HEK293 (cell line): ENCODE measurements at regions of chr3 and their contacts with region 1.

Region 1: DNA sequence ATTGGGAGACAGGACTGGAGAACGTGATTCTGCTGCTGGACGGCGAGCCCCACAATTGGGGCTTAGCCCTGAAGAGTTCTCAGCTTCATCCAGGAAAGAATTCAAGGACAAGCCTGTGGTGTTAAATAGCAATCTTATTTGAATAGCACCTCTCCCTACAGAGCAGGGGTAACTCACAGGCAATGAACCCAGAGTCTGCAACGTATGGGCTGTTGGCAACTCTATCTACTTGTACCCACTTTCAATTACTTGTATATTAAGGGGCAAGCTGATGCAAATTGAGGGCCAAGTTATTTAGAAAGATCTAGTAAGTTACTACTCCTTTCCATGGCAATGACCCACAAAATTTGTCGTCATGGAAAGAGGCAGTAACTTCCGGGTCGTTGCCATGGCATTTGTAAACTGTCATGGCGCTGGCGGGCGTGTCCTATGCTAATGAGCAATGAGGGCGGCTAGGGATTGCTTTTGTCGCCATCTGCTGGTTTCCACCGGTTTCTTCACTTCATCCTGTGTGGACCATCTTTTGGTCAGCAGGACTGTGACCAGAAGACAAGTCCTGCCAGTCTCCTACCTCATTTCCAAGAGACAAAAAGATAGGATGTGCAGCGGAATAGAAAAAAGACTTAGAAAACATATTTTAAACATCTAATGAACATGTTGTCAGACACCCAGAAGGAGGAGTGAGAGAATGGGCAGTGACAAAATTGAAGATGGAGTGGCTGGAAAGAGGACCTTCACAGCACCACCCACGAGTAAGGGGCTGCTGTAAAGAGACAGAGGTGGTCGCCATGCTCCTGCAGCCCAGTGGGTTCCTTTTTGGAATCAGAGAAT is 45.8 kb upstream of the SH3BP5 start:
- H3K4me3 ChIP-seq: no peak overlapping the region
- H3K27ac ChIP-seq: no peak overlapping the region
- H3K4me1 ChIP-seq: no peaks in the 10 kb centered on the region
- CTCF ChIP-seq: peak; percentile 74

Region 2: GRCh38 chr3:15007681-15008141 is 370.5 kb before region 1 on chr3:
- CTCF ChIA-PET with region 1: no interaction called
- POLR2A ChIA-PET with region 1: no interaction called
- H3K4me3 ChIP-seq: no peak overlapping the region
- H3K27ac ChIP-seq: no peak overlapping the region
- H3K4me1 ChIP-seq: peaks cover 5% of the 10 kb centered on the region
- CTCF ChIP-seq: no peak

Region 3: GRCh38 chr3:15345608-15346137 is 32.5 kb before region 1 on chr3:
- CTCF ChIA-PET with region 1: no interaction called
- POLR2A ChIA-PET with region 1: no interaction called
- H3K4me3 ChIP-seq: no peak overlapping the region
- H3K27ac ChIP-seq: no peak overlapping the region
- H3K4me1 ChIP-seq: no peaks in the 10 kb centered on the region
- CTCF ChIP-seq: no peak

Region 4: GRCh38 chr3:15367059-15367458 is 11.1 kb before region 1 on chr3:
- CTCF ChIA-PET with region 1: interaction called, 10 read pairs
- POLR2A ChIA-PET with region 1: no interaction called
- H3K4me3 ChIP-seq: no peak overlapping the region
- H3K27ac ChIP-seq: no peak overlapping the region
- H3K4me1 ChIP-seq: no peaks in the 10 kb centered on the region; the same call in 1 of the 2 replicates
- CTCF ChIP-seq: no peak

Region 5: GRCh38 chr3:15427182-15427880 is 49.2 kb after region 1 on chr3 and contains the starts of genes EAF1 and METTL6:
- CTCF ChIA-PET with region 1: no interaction called
- POLR2A ChIA-PET with region 1: no interaction called
- H3K4me3 ChIP-seq: peak within 1 kb of the TSS; percentile 74
- H3K27ac ChIP-seq: peak within 1 kb of the TSS; percentile 73; the same call in 1 of the 2 replicates
- H3K4me1 ChIP-seq: 0 out of 2 replicates have a peak, but pooled peaks cover 5% of the 10 kb centered on the region
- CTCF ChIP-seq: peak; percentile 49; the same call in 1 of the 2 replicates